ENCODE measurements at regions of chr19 and their contacts with region 1.

Region 1: DNA sequence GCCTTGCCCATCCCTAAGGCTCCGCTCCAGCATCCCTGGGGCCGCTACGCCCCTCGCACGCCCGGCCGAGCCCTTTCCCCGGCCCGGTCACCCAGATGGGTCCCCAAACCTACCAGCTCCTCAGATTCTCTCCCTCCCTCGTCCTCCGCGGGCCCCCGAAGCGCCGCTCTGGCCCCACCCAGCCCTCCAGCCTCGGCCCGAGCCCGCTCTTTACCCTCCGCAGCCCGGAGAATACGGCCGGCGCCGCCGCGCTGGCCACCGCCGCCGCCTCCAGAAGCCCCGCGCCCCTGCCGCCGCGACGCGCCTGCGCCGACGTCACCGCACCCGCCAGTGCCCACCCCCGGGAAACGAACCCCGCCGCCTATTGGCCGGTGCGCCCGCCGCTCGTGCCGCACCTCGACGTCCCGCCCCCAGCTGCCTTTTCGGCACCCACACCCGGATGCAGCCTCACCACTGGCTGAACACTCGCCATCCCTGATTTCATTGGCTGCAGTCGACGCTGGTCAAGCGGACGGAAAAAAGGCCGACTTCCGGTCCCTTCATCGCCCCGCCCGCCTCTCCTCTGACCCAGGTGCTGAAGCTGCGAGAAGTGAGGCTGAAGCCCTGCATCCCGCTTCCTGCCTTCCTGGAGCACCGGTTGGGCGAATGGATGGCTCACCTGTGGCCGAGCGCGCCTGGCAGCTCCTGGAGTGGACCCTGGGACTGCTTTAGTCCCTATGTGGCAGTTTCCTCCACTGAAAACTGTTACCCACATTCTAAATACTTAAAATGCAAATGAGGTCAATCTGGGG is at the start of gene DAPK3:
- DNase-seq: peak; percentile 92

Region 2: GRCh38 chr19:3836887-3837286 is 134.1 kb before region 1 on chr19:
- CTCF ChIA-PET with region 1: no interaction called
- POLR2A ChIA-PET with region 1: no interaction called
- DNase-seq: no peak

Region 3: DNA sequence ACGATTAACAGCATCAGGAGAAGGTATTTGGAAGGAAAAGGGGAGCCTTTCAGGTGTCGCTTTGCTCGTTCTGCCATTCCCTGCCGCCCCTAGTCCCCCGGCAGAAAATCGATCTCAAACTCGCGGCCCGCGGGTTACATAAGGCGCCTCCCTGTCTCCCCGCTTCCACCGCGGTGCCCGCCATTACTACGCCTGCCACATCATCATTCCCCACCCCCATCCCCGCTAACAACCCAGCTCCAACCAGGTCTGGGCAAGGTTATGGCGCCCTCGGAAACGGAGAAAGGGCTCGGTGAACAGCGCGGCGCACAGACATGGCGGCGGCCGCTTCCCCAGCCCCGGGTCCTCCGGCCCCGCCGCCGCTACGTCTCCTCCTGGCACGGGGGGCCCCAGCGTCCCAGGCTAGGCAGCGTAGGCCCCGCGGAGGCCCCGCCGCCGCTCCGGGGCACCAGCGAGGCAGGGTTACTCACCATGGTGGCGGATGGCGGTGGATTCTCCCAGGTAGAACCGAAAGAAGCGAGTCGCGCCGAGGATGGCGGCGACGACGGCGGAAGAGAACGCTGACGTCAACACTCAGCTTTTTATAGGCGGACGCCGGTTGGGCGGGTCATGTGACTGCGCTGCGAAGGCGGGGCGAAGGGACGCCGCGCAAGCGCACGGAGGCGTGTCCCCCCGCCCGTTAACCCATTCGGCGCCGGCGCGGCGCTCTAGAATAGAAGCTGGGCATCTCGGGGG is 14.1 kb after region 1 on chr19 and contains the start of gene EEF2:
- CTCF ChIA-PET with region 1: interaction called, 8 read pairs
- POLR2A ChIA-PET with region 1: interaction called, 39 read pairs
- DNase-seq: peak; percentile 93